Dendritic cell treated with granulocyte-macrophage colony-stimulating factor and Interleukin-4, amounts not matched to agents 40 ng/mL and 50 ng/mL, for 4 days (primary cell): ENCODE measurements at regions of chr7 and their contacts with region 1.

Region 1: DNA sequence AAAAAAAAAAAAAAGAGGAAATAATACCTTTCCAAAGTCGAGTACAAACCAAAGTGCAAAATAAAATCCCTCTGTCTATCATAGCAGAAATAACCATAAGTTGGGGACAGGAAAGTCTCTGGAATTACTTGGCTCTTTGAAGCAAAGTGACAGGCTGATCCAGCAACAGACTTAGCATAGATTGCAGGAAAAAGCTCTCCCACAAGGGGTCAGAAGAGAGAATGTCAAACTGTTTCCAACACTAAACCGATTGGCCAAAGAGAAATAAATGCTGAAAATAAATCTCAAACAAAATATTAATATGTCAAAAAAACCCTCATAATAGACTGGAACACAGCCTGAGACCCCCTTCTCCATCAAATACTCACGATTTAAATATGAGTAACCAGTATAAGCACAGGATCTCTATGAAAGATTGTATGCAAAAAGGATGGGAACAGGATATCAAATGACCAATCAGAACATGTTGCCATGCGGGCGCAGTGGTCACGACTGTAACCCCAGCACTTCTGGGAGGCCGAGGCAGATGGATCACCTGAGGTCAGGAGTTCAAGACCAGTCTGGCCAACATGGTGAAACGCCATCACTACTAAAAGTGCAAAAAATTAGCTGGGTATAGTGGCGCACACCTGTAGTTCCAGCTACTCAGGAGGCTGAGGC is 1000.7 kb upstream of the LRRN3 start:
- H3K4me3 Mint-ChIP-seq: no peak overlapping the region
- H3K27ac Mint-ChIP-seq: no peak overlapping the region
- H3K4me1 Mint-ChIP-seq: no peaks in the 10 kb centered on the region
- H3K27me3 Mint-ChIP-seq: no peaks in the 10 kb centered on the region

Region 2: DNA sequence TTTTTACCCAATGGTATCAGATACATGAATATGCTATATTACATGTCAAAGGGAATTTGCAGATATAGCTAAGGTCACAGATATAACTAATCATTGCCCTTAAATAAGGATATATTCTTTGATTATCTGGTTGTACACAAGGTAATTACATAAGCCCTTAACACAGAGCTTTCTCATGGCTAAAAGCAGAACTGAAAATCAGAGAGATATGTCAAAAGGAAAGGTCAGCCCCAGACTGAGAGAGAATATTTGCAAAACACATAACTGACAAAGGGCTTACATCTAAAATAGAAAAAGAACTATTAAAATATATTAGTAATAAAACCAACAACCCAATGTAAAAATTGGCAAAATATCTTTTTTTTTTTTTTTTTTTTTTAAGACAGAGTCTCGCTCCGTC is 28.9 kb before region 1 on chr7:
- intact Hi-C with region 1: no loop called
- H3K4me3 Mint-ChIP-seq: no peak overlapping the region
- H3K27ac Mint-ChIP-seq: no peak overlapping the region
- H3K4me1 Mint-ChIP-seq: no peaks in the 10 kb centered on the region
- H3K27me3 Mint-ChIP-seq: no peaks in the 10 kb centered on the region

Region 3: DNA sequence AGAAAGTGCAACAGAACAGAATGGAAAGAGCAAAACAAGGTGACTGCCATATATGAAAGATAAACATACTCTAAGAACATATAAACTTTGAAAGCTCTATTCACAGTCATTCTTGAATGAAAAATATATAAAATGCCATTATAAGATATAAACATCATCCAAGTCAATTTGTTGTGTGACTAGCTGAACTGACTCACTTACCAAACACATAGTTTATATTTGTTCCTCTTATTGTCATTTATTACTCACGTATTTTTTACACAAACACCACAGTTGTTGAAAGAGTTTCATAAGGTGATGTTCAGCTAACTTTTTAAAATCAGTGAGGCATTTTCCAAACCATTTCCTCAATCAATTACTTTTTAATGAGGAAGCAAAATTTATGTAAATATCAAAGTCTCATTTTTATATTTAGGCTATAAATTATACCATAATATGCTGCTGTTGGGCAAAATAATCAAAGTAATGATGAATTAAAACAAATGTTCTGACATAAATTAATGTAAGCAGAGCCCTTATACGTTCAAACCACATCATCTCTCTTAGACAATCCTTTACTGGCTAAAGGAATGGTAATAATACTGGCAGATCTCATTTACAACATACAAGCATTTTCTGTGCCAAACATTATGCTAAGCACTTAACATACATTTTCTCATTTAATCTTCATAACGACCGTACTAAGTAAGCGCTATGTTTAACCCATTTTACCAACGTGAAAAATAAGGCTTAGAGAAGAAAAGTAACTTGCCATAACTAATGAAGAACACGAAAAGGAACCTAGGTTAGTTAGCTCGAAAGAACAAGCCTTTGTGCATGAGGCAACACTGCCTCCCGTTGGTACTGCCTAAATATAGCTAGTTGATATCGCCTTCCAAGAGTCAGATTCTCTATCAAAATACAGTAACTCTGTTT is 1008.0 kb after region 1 on chr7:
- intact Hi-C with region 1: loop called (anchors 5 kb)
- H3K4me3 Mint-ChIP-seq: no peak overlapping the region
- H3K27ac Mint-ChIP-seq: no peak overlapping the region
- H3K4me1 Mint-ChIP-seq: no peaks in the 10 kb centered on the region
- H3K27me3 Mint-ChIP-seq: no peaks in the 10 kb centered on the region